ENCODE measurements at regions of chr10 and their contacts with region 1.

Region 1: DNA sequence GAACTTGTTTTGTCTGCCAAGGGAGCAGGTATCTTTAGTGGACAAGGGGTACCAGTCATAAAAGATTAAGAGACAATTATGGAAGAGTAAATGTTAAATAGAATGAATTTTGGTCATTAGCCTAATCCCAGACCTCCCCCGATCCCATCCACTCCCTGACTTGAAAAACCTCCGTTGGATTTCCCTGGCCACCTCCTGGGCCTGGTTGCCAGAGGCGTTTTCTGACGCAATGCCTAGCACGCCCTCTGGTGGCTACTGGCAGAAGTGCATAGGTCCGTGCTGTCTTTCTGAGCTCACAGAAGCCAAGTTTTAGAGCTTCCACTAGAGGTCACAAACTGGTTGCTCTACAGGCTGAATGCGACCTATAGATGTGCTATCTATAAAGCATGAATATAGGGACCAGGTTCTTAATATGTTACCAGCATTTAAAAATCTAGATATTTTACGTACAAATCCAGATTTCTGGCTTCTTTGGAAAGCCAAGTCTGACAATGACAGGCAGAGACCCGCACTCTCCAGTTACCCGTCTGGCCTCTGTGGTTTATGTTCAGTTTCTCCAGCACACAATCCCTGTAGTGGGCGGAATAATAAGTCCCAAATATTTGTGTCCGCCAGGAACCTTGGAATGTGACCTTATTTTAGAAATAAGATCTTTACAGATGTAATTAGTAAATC is 39.8 kb downstream of the SPOCK2 start:
- DNase-seq: peak; percentile 88 to 92
- H3K4me3 ChIP-seq: no peak overlapping the region
- H3K27ac ChIP-seq: no peak overlapping the region
- H3K4me1 ChIP-seq: peaks cover 8% of the 10 kb centered on the region; the same call in 1 of the 2 replicates
- H3K27me3 ChIP-seq: no peaks in the 10 kb centered on the region
- CTCF ChIP-seq: peak; percentile 100

Region 2: DNA sequence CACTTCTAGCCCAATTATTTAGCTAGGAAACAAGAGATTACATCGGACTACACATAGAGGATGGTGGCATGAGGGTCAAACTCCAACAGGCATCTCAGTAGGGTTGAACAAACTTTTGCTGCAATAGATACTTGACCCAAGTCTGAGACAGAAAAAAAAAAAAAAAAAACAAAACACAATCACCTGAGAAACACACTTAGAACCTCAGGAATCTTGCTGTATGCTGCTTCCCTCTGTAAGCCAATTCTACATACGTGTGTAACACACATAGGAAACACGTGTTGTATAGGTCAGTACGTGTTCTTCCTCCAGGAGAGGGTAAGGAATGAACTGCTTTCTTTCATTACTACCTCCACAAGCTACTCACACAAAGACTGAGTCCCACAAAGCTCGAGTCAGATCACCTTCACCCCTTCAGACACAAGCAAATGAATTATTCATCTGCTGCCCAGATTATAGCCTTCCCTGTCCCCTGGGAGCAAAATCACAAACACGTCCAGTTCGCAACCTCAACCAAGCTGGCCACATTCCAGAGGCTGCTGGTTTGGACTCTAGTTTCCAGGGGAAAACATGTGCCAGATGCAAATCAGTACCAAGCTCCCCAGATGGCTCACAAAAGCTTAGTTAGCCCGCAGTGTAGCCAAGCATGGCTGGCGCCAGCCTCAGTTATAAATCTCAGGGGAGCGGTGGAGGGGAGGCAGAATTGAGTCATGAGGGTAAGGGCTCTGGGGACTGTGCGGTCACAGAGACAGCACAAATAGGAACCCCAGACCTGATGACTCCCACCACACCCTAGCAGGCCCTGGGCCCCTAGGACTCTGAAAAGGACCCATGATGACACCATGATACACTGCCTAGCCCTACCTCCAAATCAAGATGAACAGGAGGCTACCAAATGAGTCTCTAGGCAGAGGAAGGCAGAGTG is 212.7 kb before region 1 on chr10:
- CTCF ChIA-PET with region 1: no interaction called
- POLR2A ChIA-PET with region 1: no interaction called
- intact Hi-C with region 1: loop called (anchors 5 kb)
- DNase-seq: peak in 1 of 2 experiments; percentile 28
- H3K4me3 ChIP-seq: no peak overlapping the region
- H3K27ac ChIP-seq: no peak overlapping the region
- H3K4me1 ChIP-seq: peaks cover 52% of the 10 kb centered on the region
- H3K27me3 ChIP-seq: no peaks in the 10 kb centered on the region
- CTCF ChIP-seq: no peak

Region 3: DNA sequence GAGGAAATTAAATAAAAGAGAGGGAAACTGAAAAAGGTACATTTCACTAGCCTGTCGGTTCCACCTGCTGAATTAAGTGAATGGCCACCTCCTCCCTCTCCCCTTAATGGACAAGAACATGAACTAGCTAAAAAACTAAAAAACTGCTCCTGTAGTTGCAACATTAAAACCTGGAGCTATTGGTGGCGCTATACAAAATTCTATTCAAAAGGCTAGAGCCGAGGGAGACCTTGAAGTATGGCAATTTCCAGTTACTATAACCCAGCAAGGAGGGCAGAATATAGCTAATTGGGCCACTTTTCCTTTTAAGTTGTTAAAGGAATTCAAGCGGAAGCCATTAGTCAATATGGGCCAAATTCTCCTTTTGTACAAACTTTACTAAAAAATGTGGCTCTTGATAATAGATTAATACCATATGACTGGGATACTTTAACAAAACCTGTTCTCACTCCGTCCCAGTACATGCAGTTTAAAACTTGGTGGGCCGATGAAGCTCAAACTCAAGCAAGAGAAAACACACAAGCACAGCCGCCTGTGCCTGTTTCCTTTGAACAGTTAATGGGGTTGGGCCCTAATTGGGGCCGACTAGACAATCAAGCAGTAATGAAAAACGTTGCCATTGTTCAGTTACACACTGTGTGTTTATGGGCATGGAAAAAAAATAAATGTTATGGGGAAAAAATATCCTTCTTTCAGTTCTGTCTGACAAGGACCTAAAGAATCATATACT is 90.9 kb before region 1 on chr10:
- CTCF ChIA-PET with region 1: interaction called, 11 read pairs
- POLR2A ChIA-PET with region 1: no interaction called
- intact Hi-C with region 1: loop called (anchors 1 kb)
- DNase-seq: no peak
- H3K4me3 ChIP-seq: no peak overlapping the region
- H3K27ac ChIP-seq: no peak overlapping the region
- H3K4me1 ChIP-seq: peaks cover 23% of the 10 kb centered on the region
- H3K27me3 ChIP-seq: no peaks in the 10 kb centered on the region
- CTCF ChIP-seq: no peak

Region 4: DNA sequence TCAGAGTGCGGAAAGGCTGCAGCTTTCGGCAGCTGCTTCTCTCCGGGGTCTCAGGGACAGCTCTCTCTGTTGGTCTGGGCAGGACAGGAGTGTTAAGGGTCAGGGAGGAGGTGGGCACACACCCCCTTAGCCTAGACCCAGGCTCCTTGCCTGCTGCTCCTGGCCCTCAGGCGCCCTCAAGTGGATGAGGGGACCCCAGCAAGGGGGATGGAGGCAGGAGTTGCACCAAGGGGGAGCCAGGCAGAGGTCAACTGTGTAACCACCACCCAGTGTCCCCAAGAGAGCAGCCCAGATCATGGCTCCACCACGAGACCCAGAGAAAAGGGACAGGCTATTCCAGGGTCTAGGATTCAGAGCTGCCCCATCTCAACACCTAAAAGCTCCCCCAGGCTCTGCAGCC is 12.9 kb after region 1 on chr10:
- CTCF ChIA-PET with region 1: interaction called, 5 read pairs
- POLR2A ChIA-PET with region 1: interaction called, 15 read pairs
- intact Hi-C with region 1: no loop called
- DNase-seq: no peak
- H3K4me3 ChIP-seq: no peak overlapping the region
- H3K27ac ChIP-seq: no peak overlapping the region
- H3K4me1 ChIP-seq: peaks cover 10% of the 10 kb centered on the region
- H3K27me3 ChIP-seq: no peaks in the 10 kb centered on the region
- CTCF ChIP-seq: peak; percentile 23; the same call in 1 of the 2 replicates

Region 5: GRCh38 chr10:72173635-72174296 is 125.2 kb after region 1 on chr10:
- CTCF ChIA-PET with region 1: no interaction called
- POLR2A ChIA-PET with region 1: no interaction called
- intact Hi-C with region 1: loop called (anchors 2 kb)
- DNase-seq: peak in 1 of 2 experiments; percentile 48
- H3K4me3 ChIP-seq: no peak overlapping the region
- H3K27ac ChIP-seq: peak overlapping the region; percentile 43
- H3K4me1 ChIP-seq: peaks cover 61% of the 10 kb centered on the region
- H3K27me3 ChIP-seq: no peaks in the 10 kb centered on the region
- CTCF ChIP-seq: no peak

Region 6: GRCh38 chr10:72194949-72195348 is 146.4 kb after region 1 on chr10:
- CTCF ChIA-PET with region 1: no interaction called
- POLR2A ChIA-PET with region 1: no interaction called
- intact Hi-C with region 1: no loop called
- DNase-seq: no peak
- H3K4me3 ChIP-seq: no peak overlapping the region
- H3K27ac ChIP-seq: no peak overlapping the region
- H3K4me1 ChIP-seq: peaks cover 13% of the 10 kb centered on the region
- H3K27me3 ChIP-seq: no peaks in the 10 kb centered on the region
- CTCF ChIP-seq: no peak

Region 7: GRCh38 chr10:72273410-72274212 is 225.0 kb after region 1 on chr10 and contains the start of gene DDIT4:
- CTCF ChIA-PET with region 1: no interaction called
- POLR2A ChIA-PET with region 1: interaction called, 11 read pairs
- intact Hi-C with region 1: no loop called
- DNase-seq: peak; percentile 99 to 100
- H3K4me3 ChIP-seq: peak within 1 kb of the TSS; percentile 88
- H3K27ac ChIP-seq: peak within 1 kb of the TSS; percentile 99
- H3K4me1 ChIP-seq: peaks cover 46% of the 10 kb centered on the region
- H3K27me3 ChIP-seq: no peaks in the 10 kb centered on the region
- CTCF ChIP-seq: no peak
- total RNA-seq, gene DDIT4: 178 and 212 TPM in 2 replicates